Heart left ventricle (tissue), 16 donors: ENCODE measurements at regions of chr1 and their contacts with region 1.

Region 1: DNA sequence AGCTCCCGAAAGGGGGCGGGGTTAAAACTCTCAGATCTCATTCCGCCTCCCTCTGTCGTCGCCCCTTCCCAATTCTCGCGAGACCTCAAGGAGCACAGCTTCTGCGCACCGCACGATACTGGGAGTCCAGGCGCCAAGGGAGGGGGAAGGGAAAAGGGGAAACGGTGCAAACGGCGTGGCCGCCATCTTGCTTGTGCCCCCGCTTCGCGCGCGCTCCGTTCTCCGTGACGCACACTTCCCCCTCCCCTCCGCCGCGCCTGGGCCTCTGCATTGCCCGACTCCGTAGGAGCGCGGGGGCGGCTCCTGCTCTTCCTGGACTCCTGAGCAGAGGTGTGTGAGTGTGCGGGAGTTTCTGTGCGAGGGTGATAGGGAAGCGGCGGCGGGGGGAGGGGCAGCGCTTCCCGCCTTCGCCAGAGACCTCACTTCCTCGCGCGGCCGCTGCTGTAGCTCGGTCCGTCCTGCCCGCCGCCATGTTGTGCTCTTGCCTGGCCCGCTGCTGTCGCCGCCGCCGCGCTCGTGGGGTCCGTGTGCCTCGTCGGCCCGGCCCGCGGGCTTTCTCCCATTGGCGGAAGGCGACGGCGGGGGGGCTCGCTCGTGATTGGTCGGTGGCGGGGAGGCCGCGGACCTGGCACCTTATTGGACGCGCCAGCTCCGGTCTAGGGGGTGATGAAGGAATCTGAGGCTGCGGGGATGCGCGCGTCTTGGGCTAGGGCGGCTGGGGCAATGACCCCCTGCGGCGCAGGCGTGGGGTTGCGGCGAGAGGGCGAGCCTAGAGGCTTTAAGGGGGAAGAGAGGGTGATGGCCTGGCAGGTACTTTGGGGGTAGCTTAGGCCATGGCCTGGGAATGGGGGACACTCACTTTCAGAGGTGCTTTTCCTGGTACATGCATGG is at the start of gene NFYC:
- DNase-seq: peak; percentile 98 to 99 (median 98)
- ATAC-seq: peak; percentile 96 to 97 (median 96)
- H3K4me3 ChIP-seq: peak within 1 kb of the TSS; percentile 58 to 98 (median 90)
- H3K27ac ChIP-seq: peak within 1 kb of the TSS; percentile 90 to 100 (median 100)
- H3K4me1 ChIP-seq: peaks cover 0 to 51% (median 31%) of the 10 kb centered on the region in 12 donors
- H3K27me3 ChIP-seq: no peaks in the 10 kb centered on the region
- CTCF ChIP-seq: no peak
- POLR2A ChIP-seq: peak in 1 of 2 donors; percentile 88
- total RNA-seq, gene NFYC: 52.6 to 82.8 (median 69.4) TPM

Region 2: DNA sequence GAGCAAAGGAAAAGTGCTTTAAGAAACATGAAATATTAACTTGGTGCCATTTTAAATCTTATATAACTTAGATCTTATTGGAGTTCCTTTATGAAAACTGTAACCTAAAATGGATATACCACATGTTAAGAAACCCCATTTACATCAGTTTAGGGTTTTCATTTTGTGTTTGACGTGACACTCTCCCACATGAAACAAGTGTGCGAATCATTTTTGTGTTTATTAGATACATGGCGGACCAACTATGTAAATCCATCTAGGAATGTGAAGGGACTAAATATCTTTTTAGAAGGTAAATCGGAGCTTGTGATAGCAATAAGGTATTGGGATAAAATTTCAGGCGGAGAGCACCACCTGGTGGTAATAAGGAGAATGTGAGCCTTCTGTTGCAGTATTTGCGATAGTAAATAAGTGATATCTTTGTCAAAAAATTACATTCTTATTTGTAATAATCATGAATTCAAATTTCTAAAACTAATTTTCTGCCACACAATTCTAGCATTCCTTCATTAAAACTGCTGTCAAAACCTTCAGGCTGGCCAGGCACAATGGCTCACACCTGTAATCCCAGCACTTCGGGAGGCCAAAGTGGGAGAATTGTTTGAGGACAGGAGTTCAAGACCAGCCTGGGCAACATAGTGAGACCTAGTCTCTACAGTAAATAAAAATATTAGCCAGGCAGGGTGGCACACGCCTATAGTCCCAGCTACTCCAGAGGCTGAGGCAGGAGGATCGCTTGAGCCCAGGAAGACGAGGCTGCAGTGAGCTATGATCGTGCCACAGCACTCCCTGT is 286.9 kb before region 1 on chr1:
- intact Hi-C with region 1: no loop called
- DNase-seq: peak in 1 of 5 donors; percentile 25
- ATAC-seq: peak in 2 of 4 donors; percentile 57 to 61
- H3K4me3 ChIP-seq: peak overlapping the region in 1 of 12 donors; percentile 8
- H3K27ac ChIP-seq: peak overlapping the region in 2 of 12 donors; percentile 13 to 67
- H3K4me1 ChIP-seq: peaks cover 0 to 53% (median 2%) of the 10 kb centered on the region in 12 donors
- H3K27me3 ChIP-seq: no peaks in the 10 kb centered on the region
- CTCF ChIP-seq: peak; percentile 74 to 92 (median 86)
- POLR2A ChIP-seq: no peak

Region 3: GRCh38 chr1:40736085-40736531 is 44.3 kb after region 1 on chr1:
- intact Hi-C with region 1: loop called in 1 of 10 experiments (anchors 5 kb)
- DNase-seq: no peak
- ATAC-seq: peak; percentile 68 to 86 (median 73)
- H3K4me3 ChIP-seq: no peak overlapping the region
- H3K27ac ChIP-seq: peak overlapping the region in 10 of 12 donors; percentile 9 to 73 (median 33)
- H3K4me1 ChIP-seq: peaks cover 0 to 84% (median 49%) of the 10 kb centered on the region in 12 donors
- H3K27me3 ChIP-seq: no peaks in the 10 kb centered on the region
- CTCF ChIP-seq: no peak
- POLR2A ChIP-seq: no peak

Region 4: GRCh38 chr1:40796939-40797667 is 105.3 kb after region 1 on chr1:
- intact Hi-C with region 1: no loop called
- DNase-seq: peak in 3 of 5 donors; percentile 76 to 90 (median 84)
- ATAC-seq: peak; percentile 68 to 92 (median 79)
- H3K4me3 ChIP-seq: no peak overlapping the region
- H3K27ac ChIP-seq: peak overlapping the region in 2 of 12 donors; percentile 18 to 79
- H3K4me1 ChIP-seq: peaks cover 6 to 45% (median 29%) of the 10 kb centered on the region in 12 donors
- H3K27me3 ChIP-seq: no peaks in the 10 kb centered on the region
- CTCF ChIP-seq: no peak
- POLR2A ChIP-seq: no peak